ENCODE measurements at regions of chr14 and their contacts with region 1.

Region 1: DNA sequence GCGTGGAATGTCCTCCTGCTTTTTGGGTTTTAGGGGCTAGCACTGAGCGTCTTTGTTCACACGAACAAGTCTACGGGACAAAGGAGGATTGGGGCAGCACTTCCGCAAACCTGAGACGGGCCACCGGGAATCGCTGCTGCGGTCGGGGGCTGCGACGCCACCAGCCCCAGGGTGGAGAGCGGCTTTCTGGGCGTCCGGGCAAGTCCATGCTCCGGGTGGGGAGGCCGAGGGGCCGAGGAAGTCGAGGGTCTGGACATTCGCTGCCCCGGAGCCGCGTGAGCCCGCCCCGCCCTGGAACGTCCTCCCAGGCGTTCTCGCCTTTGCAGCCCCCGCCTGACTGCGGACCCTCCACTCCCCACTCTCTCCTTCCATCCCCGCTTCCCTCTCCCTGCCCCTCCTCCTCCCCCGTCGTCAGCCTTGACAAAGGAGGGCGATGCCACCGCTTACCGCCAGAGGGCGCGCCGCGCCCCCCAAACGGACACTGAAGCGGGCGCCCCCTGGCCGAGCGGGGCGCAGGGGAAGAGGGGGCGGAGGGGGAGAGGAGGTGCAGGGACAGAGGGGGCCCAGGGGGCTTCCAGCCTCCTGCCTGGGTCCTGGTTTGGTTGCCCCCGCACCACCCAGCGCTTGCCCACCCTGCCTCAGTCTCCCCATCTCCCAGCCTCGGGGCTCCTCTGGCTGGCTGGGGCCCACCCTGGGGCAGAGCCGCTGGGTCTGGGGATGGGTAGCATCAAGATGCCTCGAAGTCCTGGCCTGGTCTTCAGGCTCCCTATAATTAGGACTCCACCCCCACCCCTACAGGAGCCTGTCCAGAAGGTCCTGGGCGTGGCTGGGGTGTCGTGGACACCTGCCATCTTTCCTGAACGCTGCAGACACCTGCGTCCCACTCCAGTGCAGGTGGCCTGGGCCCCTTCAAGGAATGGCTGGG is 39.1 kb upstream of the INF2 start:
- DNase-seq: peak; percentile 82
- H3K4me3 ChIP-seq: peak overlapping the region; percentile 43 to 48
- H3K27ac ChIP-seq: no peak overlapping the region
- H3K4me1 ChIP-seq: no peaks in the 10 kb centered on the region
- H3K27me3 ChIP-seq: no peaks in the 10 kb centered on the region
- CTCF ChIP-seq: peak; percentile 92 to 100 (median 93)
- POLR2A ChIP-seq: no peak

Region 2: GRCh38 chr14:104331871-104332605 is 318.3 kb before region 1 on chr14:
- intact Hi-C with region 1: no loop called
- DNase-seq: peak; percentile 9
- H3K4me3 ChIP-seq: no peak overlapping the region
- H3K27ac ChIP-seq: no peak overlapping the region
- H3K4me1 ChIP-seq: peaks cover 3% of the 10 kb centered on the region
- H3K27me3 ChIP-seq: no peaks in the 10 kb centered on the region
- CTCF ChIP-seq: no peak
- POLR2A ChIP-seq: no peak

Region 3: DNA sequence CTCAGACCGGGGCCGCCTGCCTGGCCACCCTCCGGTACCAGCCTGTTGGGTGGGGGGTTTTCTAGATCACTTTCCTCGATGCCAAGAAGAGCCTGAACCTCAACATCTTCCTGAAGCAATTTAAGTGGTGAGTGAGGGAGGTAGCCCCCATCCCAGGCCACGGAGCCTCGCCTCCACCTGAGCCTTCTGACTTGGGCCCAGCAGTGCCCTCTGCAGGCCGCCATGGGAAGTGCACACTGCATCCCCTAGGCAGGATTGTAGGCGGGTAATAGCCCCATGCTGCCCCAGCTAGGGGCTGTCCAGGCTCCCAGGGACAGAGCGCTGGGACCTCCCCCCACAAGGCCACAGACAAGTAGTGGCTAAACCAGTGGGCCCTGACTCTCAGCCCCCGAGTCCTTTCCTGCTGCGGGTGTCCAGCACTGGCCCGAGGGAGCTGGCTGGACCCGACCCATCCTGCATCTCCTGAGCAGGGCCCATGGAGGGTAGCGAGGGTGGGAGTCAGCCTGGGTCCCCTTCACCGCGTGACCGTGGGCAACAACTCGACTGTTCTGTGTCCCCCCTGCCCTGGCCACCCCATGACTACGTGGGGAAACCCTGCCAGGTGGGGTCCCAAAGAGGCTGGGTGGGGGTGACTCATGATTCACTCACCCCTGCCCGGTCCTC is 58.4 kb after region 1 on chr14:
- intact Hi-C with region 1: loop called (anchors 5 kb)
- DNase-seq: peak; percentile 77
- H3K4me3 ChIP-seq: no peak overlapping the region
- H3K27ac ChIP-seq: no peak overlapping the region
- H3K4me1 ChIP-seq: no peaks in the 10 kb centered on the region
- H3K27me3 ChIP-seq: no peaks in the 10 kb centered on the region
- CTCF ChIP-seq: peak; percentile 91 to 97 (median 97)
- POLR2A ChIP-seq: no peak

Region 4: DNA sequence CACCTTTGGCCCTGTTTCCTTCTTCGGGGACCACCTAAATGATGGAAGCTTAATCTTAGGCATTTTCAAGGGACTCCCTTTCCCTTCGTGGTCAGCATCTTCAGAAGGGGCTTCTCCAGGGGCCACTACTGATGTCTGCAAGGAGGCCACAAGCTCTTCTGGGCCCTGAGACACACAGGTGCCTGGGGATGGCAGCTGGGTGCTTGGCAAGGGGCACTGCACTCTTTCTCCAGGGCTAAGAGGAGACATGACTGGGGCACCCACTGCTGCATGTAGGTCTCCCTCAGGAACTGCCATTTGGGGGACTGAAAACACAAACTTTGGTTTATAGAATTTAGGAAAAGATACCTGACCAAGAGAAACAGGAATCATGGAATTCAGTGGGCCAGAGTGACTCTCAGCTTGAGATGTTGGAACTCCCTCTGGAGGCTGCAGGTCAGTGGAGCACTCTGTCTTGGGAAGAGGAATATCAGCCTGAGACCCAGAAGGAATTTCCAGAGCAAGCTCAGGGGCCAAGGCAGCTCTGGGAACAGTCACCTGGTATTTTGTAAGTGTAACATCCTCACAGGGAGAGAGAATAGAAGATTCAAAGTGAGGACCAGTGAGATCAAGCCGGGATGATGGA is 290.3 kb after region 1 on chr14:
- intact Hi-C with region 1: no loop called
- DNase-seq: no peak
- H3K4me3 ChIP-seq: no peak overlapping the region
- H3K27ac ChIP-seq: no peak overlapping the region
- H3K4me1 ChIP-seq: no peaks in the 10 kb centered on the region
- H3K27me3 ChIP-seq: no peaks in the 10 kb centered on the region
- CTCF ChIP-seq: peak in 1 of 3 experiments; percentile 16
- POLR2A ChIP-seq: no peak

Measured in testis (tissue), 5 donors.